Naive thymus-derived CD4-positive, alpha-beta T cell (primary cell): ENCODE measurements at regions of chr11 and their contacts with region 1.

Region 1: DNA sequence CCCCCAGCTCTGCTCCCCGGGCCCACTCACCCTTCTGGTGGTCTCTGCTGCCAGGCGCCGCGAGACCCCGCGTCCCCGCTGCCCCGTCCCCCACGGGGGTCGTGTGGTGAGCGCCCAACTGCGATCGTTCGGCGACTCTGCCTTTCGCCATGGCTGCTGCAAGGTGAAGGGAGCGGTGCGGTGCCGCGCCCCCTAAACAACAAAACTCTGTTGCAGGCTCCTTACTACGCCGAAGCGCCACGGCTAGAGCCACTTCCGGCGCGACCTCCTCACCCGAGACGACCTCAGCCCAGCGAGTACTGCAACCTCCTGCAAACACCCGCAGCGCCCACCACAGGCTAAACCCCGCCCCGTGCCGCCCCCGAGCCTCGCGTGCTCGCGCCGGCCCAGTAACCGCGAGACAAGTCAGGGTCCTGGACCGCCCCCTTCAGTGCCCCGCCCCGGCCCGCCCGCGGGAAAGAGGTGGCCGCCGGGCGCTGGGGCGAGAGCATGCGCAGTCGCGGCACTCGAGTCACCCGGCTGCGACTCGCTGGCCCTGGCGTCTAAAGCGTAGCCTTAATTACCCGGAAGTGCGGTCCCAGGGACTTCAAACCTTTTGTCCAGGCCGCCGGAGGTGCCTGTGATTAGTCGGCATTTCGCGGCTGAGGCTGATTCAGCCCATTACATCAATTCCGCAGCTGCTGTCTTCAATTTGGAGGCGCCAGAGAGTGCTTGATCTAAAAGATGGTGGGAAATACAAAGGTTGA is at the start of gene TMEM41B:
- DNase-seq: peak; percentile 98 to 100 (median 98)
- ATAC-seq: peak; percentile 98
- H3K4me3 ChIP-seq: peak within 1 kb of the TSS; percentile 90
- H3K4me3 Mint-ChIP-seq: peak within 1 kb of the TSS; percentile 97 to 100 (median 99)
- H3K27ac ChIP-seq: peak within 1 kb of the TSS; percentile 88
- H3K27ac Mint-ChIP-seq: peak within 1 kb of the TSS; percentile 96 to 99 (median 98)
- H3K4me1 ChIP-seq: peaks cover 16 to 23% of the 10 kb centered on the region in 2 donors
- H3K4me1 Mint-ChIP-seq: peaks cover 19 to 49% (median 44%) of the 10 kb centered on the region in 7 donors
- H3K27me3 ChIP-seq: no peaks in the 10 kb centered on the region
- H3K27me3 Mint-ChIP-seq: peaks cover 6 to 29% (median 11%) of the 10 kb centered on the region in 5 donors
- total RNA-seq, gene TMEM41B: 33.9 to 73.7 (median 49.0) TPM

Region 2: GRCh38 chr11:8682303-8683114 is 632.0 kb before region 1 on chr11 and contains the starts of genes RPL27A and TRIM66:
- CTCF ChIA-PET with region 1: no interaction called
- POLR2A ChIA-PET with region 1: interaction called, 3 read pairs
- intact Hi-C with region 1: loop called (anchors 1 to 10 kb)
- DNase-seq: peak; percentile 97 to 100 (median 99)
- ATAC-seq: peak; percentile 98
- H3K4me3 ChIP-seq: peak within 1 kb of the TSS; percentile 73
- H3K4me3 Mint-ChIP-seq: peak within 1 kb of the TSS; percentile 89 to 97 (median 96)
- H3K27ac ChIP-seq: peak within 1 kb of the TSS; percentile 99
- H3K27ac Mint-ChIP-seq: peak within 1 kb of the TSS; percentile 97 to 99 (median 98)
- H3K4me1 ChIP-seq: peaks cover 17% of the 10 kb centered on the region in 2 donors
- H3K4me1 Mint-ChIP-seq: peaks cover 30 to 57% (median 43%) of the 10 kb centered on the region in 7 donors
- H3K27me3 ChIP-seq: no peaks in the 10 kb centered on the region
- H3K27me3 Mint-ChIP-seq: no peaks in the 10 kb centered on the region
- total RNA-seq, gene RPL27A: 758 to 2,116 (median 1,670) TPM
- total RNA-seq, gene TRIM66: 16.0 to 37.6 (median 24.2) TPM

Region 3: GRCh38 chr11:8964324-8965320 is 349.8 kb before region 1 on chr11 and contains the start of gene TMEM9B:
- CTCF ChIA-PET with region 1: no interaction called
- POLR2A ChIA-PET with region 1: no interaction called
- intact Hi-C with region 1: loop called (anchors 1 kb)
- DNase-seq: peak; percentile 35 to 85 (median 66)
- ATAC-seq: peak; percentile 90
- H3K4me3 ChIP-seq: peak within 1 kb of the TSS; percentile 96
- H3K4me3 Mint-ChIP-seq: peak within 1 kb of the TSS; percentile 94 to 99 (median 98)
- H3K27ac ChIP-seq: peak within 1 kb of the TSS; percentile 92
- H3K27ac Mint-ChIP-seq: peak within 1 kb of the TSS; percentile 94 to 99 (median 98)
- H3K4me1 ChIP-seq: peaks cover 13 to 17% of the 10 kb centered on the region in 2 donors
- H3K4me1 Mint-ChIP-seq: peaks cover 17 to 45% (median 32%) of the 10 kb centered on the region in 7 donors
- H3K27me3 ChIP-seq: no peaks in the 10 kb centered on the region
- H3K27me3 Mint-ChIP-seq: no peaks in the 10 kb centered on the region
- total RNA-seq, gene TMEM9B: 16.2 to 33.6 (median 30.6) TPM

Region 4: DNA sequence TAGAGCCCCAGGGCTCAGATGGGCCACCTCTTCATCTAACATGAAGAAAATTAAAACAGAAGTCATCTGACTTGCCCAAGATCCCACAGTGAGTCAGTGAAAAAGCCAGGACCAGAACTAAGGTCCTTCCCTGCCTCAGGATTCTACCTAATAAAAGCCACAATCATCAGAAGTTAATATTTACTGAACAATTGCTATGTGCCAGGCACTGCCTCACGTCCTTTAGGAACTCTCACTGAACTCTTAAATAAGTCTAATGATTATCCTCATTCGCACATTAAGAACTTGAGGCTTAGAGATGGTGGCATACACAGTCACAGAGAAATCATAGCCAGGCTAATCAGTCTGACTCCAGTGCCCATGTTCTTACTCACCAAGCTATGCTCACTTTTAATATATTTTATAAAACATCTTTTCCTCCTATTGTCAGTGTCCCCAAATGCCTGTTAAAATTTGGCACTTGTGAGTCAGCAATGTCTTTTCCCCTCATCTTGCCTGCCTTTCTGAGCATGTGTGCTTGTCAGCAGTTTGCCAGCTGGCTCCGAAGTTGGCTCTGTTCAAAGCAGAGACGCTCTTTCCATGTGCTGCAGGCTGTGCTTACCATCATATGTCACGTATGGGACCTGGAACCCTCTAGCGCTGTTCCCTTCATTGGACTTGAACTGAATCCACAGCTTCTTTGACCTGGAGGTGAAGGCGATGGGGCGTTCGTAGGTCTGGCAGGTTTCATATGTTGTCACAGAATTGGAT is 289.2 kb before region 1 on chr11:
- CTCF ChIA-PET with region 1: no interaction called
- POLR2A ChIA-PET with region 1: no interaction called
- intact Hi-C with region 1: no loop called
- DNase-seq: no peak
- ATAC-seq: no peak
- H3K4me3 ChIP-seq: no peak overlapping the region
- H3K4me3 Mint-ChIP-seq: no peak overlapping the region
- H3K27ac ChIP-seq: no peak overlapping the region
- H3K27ac Mint-ChIP-seq: no peak overlapping the region
- H3K4me1 ChIP-seq: no peaks in the 10 kb centered on the region
- H3K4me1 Mint-ChIP-seq: peaks cover 0 to 9% (median 0%) of the 10 kb centered on the region in 7 donors
- H3K27me3 ChIP-seq: no peaks in the 10 kb centered on the region
- H3K27me3 Mint-ChIP-seq: peaks cover 0 to 28% (median 4%) of the 10 kb centered on the region in 5 donors

Region 5: GRCh38 chr11:9250139-9250582 is 64.3 kb before region 1 on chr11:
- CTCF ChIA-PET with region 1: interaction called, 5 read pairs
- POLR2A ChIA-PET with region 1: interaction called, 10 read pairs
- intact Hi-C with region 1: loop called (anchors 1 kb)
- DNase-seq: peak in 8 of 9 donors; percentile 40 to 83 (median 70)
- ATAC-seq: peak; percentile 92
- H3K4me3 ChIP-seq: peak overlapping the region; percentile 29
- H3K4me3 Mint-ChIP-seq: peak overlapping the region; percentile 62 to 84 (median 75)
- H3K27ac ChIP-seq: peak overlapping the region; percentile 62
- H3K27ac Mint-ChIP-seq: peak overlapping the region; percentile 67 to 94 (median 83)
- H3K4me1 ChIP-seq: peaks cover 14 to 72% of the 10 kb centered on the region in 2 donors
- H3K4me1 Mint-ChIP-seq: peaks cover 44 to 91% (median 69%) of the 10 kb centered on the region in 7 donors
- H3K27me3 ChIP-seq: no peaks in the 10 kb centered on the region
- H3K27me3 Mint-ChIP-seq: no peaks in the 10 kb centered on the region

Region 6: GRCh38 chr11:9280655-9281301 is 33.7 kb before region 1 on chr11:
- CTCF ChIA-PET with region 1: interaction called, 5 read pairs
- POLR2A ChIA-PET with region 1: interaction called, 14 read pairs
- intact Hi-C with region 1: loop called (anchors 1 kb)
- DNase-seq: peak in 8 of 9 donors; percentile 59 to 80 (median 72)
- ATAC-seq: peak; percentile 95
- H3K4me3 ChIP-seq: peak overlapping the region; percentile 37
- H3K4me3 Mint-ChIP-seq: peak overlapping the region; percentile 35 to 79 (median 77)
- H3K27ac ChIP-seq: peak overlapping the region; percentile 55
- H3K27ac Mint-ChIP-seq: peak overlapping the region; percentile 72 to 94 (median 82)
- H3K4me1 ChIP-seq: peaks cover 11 to 14% of the 10 kb centered on the region in 2 donors
- H3K4me1 Mint-ChIP-seq: peaks cover 11 to 36% (median 17%) of the 10 kb centered on the region in 7 donors
- H3K27me3 ChIP-seq: no peaks in the 10 kb centered on the region
- H3K27me3 Mint-ChIP-seq: no peaks in the 10 kb centered on the region

Region 7: DNA sequence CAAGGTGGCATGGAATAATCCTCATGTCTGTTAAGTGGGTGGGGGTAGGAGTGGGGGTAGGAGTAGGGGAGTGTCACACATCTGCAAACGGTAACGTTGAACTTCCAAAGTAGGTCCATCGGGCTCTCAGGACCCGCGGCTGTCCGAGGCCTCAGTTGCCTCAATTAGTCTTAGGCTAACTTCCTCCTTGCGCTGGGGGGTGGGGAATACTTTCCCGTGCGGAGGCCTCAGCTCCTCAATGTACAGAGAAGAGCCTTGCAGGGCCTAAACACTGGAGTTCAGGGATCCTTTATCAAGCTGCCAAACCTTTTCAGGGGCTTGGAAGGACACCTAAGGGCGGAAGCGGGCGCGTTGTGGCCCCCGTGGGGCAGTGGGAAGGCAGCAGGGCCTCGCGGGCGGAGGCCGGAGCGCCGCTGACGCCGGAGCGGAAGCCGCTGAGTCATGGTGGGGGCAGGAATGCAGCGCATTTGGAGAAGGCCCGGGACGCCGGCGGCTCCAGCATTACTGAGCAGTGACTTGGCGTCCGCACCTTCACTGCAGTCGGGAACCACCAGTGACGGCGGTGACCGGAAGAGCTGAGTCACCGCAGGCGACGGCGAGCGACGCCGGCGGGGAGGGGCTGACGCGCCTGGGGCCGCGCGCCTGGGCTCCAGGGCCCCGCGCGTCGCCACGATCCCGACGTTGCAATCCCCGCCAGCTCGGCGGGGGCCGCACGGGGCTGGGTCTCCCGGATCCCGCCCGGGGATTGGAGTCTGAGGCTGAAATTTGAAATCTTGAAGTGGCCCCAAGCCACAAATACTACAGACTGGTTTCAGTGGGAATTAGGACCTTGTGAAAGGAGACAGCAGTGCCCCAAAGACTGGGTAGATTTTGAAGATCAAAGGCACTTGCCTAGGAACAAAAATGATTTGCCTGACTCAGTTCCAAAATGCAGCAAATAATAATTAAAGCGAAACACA is 49.8 kb after region 1 on chr11:
- CTCF ChIA-PET with region 1: no interaction called
- POLR2A ChIA-PET with region 1: interaction called, 38 read pairs
- intact Hi-C with region 1: loop called (anchors 1 kb)
- DNase-seq: peak; percentile 38 to 82 (median 66)
- ATAC-seq: peak; percentile 95
- H3K4me3 ChIP-seq: peak overlapping the region; percentile 85
- H3K4me3 Mint-ChIP-seq: peak overlapping the region; percentile 78 to 89 (median 84)
- H3K27ac ChIP-seq: peak overlapping the region; percentile 73
- H3K27ac Mint-ChIP-seq: peak overlapping the region; percentile 78 to 94 (median 90)
- H3K4me1 ChIP-seq: peaks cover 2 to 5% of the 10 kb centered on the region in 2 donors
- H3K4me1 Mint-ChIP-seq: peaks cover 0 to 30% (median 14%) of the 10 kb centered on the region in 7 donors
- H3K27me3 ChIP-seq: no peaks in the 10 kb centered on the region
- H3K27me3 Mint-ChIP-seq: no peaks in the 10 kb centered on the region

Region 8: DNA sequence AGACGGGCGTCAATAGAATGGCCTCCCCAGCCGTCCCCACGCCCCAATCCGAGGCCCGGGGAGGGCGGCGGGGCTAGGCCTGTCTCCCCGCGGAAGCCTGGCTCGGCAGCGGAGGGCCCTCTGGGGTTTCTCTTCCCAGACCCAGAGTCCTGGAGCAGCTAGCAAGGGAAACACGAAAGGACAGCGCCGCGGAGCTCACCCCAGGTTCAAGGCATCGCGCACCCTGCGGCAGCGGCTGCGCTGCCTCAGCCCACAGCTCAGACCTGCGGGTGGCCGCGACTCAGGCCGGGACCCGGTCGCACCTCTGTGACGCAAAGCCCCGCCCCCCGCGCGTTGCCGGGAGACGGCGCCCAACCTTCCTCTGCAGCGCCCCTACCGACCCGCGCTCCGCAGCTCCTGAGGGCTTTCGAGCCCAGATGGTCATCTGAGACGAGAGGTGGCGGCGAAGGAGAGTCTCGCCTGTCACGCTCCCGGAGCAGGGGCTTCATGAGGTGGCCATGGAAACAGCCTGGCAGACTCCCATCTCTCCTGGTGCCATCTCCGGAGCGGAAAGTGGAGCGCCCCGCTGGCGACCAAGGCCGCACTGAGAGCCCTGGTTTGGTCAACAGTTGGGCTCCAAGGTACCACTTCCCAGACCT is 1226.6 kb after region 1 on chr11 and contains the start of gene RNF141:
- CTCF ChIA-PET with region 1: no interaction called
- POLR2A ChIA-PET with region 1: no interaction called
- intact Hi-C with region 1: loop called in 1 of 2 experiments (anchors 2 kb)
- DNase-seq: peak; percentile 87 to 99 (median 94)
- ATAC-seq: peak; percentile 99
- H3K4me3 ChIP-seq: peak within 1 kb of the TSS; percentile 81
- H3K4me3 Mint-ChIP-seq: peak within 1 kb of the TSS; percentile 86 to 93 (median 90)
- H3K27ac ChIP-seq: peak within 1 kb of the TSS; percentile 90
- H3K27ac Mint-ChIP-seq: peak within 1 kb of the TSS; percentile 68 to 95 (median 86)
- H3K4me1 ChIP-seq: peaks cover 0 to 8% of the 10 kb centered on the region in 2 donors
- H3K4me1 Mint-ChIP-seq: peaks cover 9 to 37% (median 27%) of the 10 kb centered on the region in 7 donors
- H3K27me3 ChIP-seq: no peaks in the 10 kb centered on the region
- H3K27me3 Mint-ChIP-seq: no peaks in the 10 kb centered on the region
- total RNA-seq, gene RNF141: 11.9 to 22.7 (median 17.3) TPM